ENCODE measurements at regions of chr2 and their contacts with region 1.

Region 1: DNA sequence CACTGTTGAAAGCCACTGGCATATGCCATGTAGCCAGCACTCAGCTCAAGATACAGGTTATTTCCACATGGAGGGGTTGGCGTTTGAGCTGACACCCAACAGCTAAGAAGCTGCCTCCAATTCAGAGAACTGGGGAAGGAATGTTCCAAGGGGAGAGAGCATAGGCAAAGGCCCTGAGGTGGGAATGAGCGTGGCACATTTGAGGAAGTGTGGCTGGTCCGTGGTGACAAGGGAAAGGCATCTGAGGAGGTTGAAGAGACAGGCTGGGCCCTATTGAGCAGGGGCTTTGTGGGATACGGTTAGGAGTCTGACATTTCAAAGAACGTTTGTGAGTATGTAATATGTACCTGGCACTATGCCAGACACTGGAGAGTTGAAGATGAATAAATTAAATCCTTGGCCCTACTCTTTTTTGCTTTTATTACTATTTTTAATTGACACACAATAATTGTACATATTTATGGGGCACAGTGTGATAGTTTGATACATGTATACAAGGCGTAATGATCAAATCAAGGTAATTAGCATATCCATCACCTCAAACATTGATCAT is 27.6 kb upstream of the TMBIM1 start:
- DNase-seq: no peak
- ATAC-seq: no peak
- H3K4me3 ChIP-seq: no peak overlapping the region
- H3K27ac ChIP-seq: no peak overlapping the region
- H3K4me1 ChIP-seq: peaks cover 0 to 7% of the 10 kb centered on the region in 2 donors
- H3K27me3 ChIP-seq: no peaks in the 10 kb centered on the region
- CTCF ChIP-seq: no peak
- POLR2A ChIP-seq: no peak

Region 2: DNA sequence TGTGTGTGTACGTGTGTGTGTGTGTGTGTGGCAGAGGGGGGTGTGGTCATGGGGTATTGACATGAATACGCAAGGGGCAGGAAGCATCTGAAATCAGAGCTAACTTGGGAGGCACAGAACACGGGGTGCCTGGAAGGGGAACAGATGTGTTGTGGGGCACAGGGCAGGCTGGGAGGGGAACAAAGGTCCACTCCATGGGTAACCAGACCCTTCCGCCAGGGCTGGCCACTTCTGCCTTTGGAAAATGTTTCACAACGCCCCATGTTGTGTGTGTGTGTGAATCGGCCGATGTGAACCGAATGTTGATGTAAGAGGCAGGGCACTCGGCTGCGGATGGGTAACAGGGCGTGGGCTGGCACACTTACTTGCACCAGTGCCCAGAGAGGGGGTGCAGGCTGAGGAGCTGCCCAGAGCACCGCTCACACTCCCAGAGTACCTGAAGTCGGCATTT is 62.1 kb after region 1 on chr2 and contains the start of gene SLC11A1:
- in situ Hi-C with region 1: loop called in 1 of 4 experiments (anchors 5 kb)
- intact Hi-C with region 1: no loop called
- DNase-seq: peak in 1 of 2 donors; percentile 60
- ATAC-seq: peak in 1 of 2 donors; percentile 60
- H3K4me3 ChIP-seq: peak within 1 kb of the TSS in 1 of 4 donors; percentile 17
- H3K27ac ChIP-seq: peak within 1 kb of the TSS in 1 of 4 donors; percentile 0
- H3K4me1 ChIP-seq: no peaks in the 10 kb centered on the region
- H3K27me3 ChIP-seq: no peaks in the 10 kb centered on the region
- CTCF ChIP-seq: no peak
- POLR2A ChIP-seq: peak; percentile 26 to 33
- total RNA-seq, gene SLC11A1: 1.1 to 6.3 (median 4.5) TPM

Region 3: DNA sequence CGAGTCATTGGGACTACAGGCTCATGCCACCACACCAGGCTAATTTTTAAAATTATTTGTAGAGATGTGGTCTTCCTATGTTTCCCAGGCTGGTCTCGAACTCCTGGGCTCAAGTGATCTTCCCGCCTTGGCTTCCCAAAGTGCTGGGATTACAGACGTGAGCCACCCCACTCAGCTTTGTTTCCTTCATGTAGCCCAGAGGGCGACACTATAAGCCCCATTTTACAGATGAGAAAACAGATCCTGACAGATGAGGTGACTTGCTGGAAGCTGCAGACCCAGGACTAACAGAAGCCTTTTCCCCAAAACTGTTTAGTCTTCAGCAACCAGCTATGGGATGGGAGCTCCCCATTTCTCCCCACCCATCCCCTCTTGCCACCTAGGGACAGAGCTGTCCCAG is 72.6 kb after region 1 on chr2:
- in situ Hi-C with region 1: no loop called
- intact Hi-C with region 1: no loop called
- DNase-seq: no peak
- ATAC-seq: no peak
- H3K4me3 ChIP-seq: no peak overlapping the region
- H3K27ac ChIP-seq: no peak overlapping the region
- H3K4me1 ChIP-seq: peaks cover 8 to 11% of the 10 kb centered on the region in 2 donors
- H3K27me3 ChIP-seq: no peaks in the 10 kb centered on the region
- CTCF ChIP-seq: no peak
- POLR2A ChIP-seq: no peak

Measured in gastrocnemius medialis (tissue), 4 donors.